GM12878 (cell line): ENCODE measurements at regions of chr4 and their contacts with region 1.

Region 1: DNA sequence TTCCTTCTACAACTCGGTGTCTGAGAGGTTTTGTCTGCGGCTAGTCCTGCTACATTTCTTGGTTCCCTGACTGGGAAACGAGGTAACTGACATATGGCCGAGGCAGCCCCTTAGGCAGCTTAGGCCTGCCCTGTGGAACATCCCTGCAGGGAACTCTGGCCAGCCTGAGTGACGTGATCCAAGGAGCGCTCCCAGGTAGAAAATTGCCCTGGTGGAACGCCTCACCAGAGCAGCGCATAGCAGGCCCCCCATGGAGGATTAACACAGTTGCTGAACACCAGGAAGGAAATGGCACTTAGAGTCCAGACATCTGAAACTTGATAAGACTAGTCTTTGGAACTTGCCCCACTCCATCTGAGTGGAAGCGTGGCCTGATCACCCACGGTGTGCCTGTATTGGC is 837.4 kb upstream of the NDST4 start:
- DNase-seq: no peak
- ATAC-seq: peak; percentile 46
- H3K4me3 ChIP-seq: no peak overlapping the region
- H3K27ac ChIP-seq: peak overlapping the region; percentile 80
- H3K4me1 ChIP-seq: peaks cover 6% of the 10 kb centered on the region
- H3K27me3 ChIP-seq: no peaks in the 10 kb centered on the region
- CTCF ChIP-seq: no peak
- EP300 ChIP-seq: no peak
- POLR2A ChIP-seq: no peak
- RAD21 ChIP-seq: no peak

Region 2: GRCh38 chr4:115274545-115274944 is 676.3 kb before region 1 on chr4:
- CTCF ChIA-PET with region 1: no interaction called
- POLR2A ChIA-PET with region 1: no interaction called
- RAD21 ChIA-PET with region 1: no interaction called
- SMC1A ChIA-PET with region 1: no interaction called
- in situ Hi-C with region 1: no loop called
- intact Hi-C with region 1: loop called (anchors 10 kb)
- DNase-seq: no peak
- ATAC-seq: peak; percentile 72
- H3K4me3 ChIP-seq: no peak overlapping the region
- H3K27ac ChIP-seq: no peak overlapping the region
- H3K4me1 ChIP-seq: 0 out of 2 replicates have a peak, but pooled peaks cover 4% of the 10 kb centered on the region
- H3K27me3 ChIP-seq: no peaks in the 10 kb centered on the region
- CTCF ChIP-seq: no peak
- EP300 ChIP-seq: peak in 1 of 2 experiments; percentile 40; a peak in 1 of 4 replicates
- POLR2A ChIP-seq: no peak
- RAD21 ChIP-seq: no peak

Region 3: GRCh38 chr4:116001265-116001664 is 50.5 kb after region 1 on chr4:
- CTCF ChIA-PET with region 1: no interaction called
- POLR2A ChIA-PET with region 1: no interaction called
- RAD21 ChIA-PET with region 1: no interaction called
- SMC1A ChIA-PET with region 1: no interaction called
- in situ Hi-C with region 1: no loop called
- intact Hi-C with region 1: no loop called
- DNase-seq: no peak
- ATAC-seq: no peak
- H3K4me3 ChIP-seq: no peak overlapping the region
- H3K27ac ChIP-seq: no peak overlapping the region
- H3K4me1 ChIP-seq: no peaks in the 10 kb centered on the region
- H3K27me3 ChIP-seq: no peaks in the 10 kb centered on the region
- CTCF ChIP-seq: no peak
- EP300 ChIP-seq: no peak
- POLR2A ChIP-seq: no peak
- RAD21 ChIP-seq: no peak